Testis (tissue), 5 donors: ENCODE measurements at regions of chr1 and their contacts with region 1.

Region 1: DNA sequence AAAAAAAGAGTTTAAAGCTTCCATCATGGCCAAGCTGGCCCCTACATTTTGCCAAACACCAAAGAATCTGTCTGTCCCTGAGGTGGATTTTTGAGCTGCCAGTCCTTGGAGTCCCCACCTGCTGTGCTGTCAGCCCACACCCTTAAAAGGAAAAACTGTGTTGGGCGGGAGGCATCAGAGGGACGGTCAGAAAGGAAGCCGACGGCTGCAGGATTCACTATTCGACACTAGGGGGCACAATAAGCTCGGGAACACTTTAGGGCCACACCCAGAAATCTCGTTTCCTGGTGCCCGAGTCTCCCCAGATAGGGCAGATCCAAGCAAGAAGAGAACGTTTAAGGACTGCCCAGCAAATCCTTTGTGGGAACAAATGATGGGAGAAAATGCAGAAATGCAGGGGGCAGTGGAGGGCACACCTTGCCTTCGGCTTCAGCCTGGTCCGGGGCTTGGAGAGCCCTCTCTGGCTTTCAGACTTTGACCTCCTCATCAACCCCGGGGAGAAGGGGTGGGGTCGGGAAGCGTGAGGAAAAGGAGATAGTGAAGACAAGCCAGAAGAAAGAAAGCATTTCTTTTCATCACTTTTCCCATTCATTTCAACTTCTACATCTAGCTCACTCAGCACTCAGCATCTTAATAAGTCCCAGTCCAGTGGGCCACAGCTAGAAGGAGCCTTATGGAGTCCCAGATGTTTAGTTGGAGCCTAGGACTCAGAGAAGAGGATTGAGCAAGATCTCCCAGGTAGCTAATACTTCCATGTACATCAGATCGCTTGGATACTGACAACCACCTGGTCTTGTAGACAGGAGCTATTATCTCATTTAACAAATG is 5.0 kb upstream of the CTTNBP2NL start:
- DNase-seq: peak; percentile 94
- H3K4me3 ChIP-seq: peak overlapping the region; percentile 24 to 27
- H3K27ac ChIP-seq: peak overlapping the region in 1 of 2 donors; percentile 65
- H3K4me1 ChIP-seq: peaks cover 10% of the 10 kb centered on the region
- H3K27me3 ChIP-seq: no peaks in the 10 kb centered on the region
- CTCF ChIP-seq: peak; percentile 90 to 94 (median 92)
- POLR2A ChIP-seq: no peak

Region 2: GRCh38 chr1:112466078-112466660 is 75.2 kb after region 1 on chr1:
- intact Hi-C with region 1: loop called (anchors 5 kb)
- DNase-seq: peak; percentile 98
- H3K4me3 ChIP-seq: peak overlapping the region; percentile 32 to 45
- H3K27ac ChIP-seq: peak overlapping the region; percentile 40 to 71
- H3K4me1 ChIP-seq: peaks cover 5% of the 10 kb centered on the region
- H3K27me3 ChIP-seq: no peaks in the 10 kb centered on the region
- CTCF ChIP-seq: peak; percentile 85 to 92 (median 92)
- POLR2A ChIP-seq: no peak